ENCODE measurements at regions of chr16 and their contacts with region 1.

Region 1: DNA sequence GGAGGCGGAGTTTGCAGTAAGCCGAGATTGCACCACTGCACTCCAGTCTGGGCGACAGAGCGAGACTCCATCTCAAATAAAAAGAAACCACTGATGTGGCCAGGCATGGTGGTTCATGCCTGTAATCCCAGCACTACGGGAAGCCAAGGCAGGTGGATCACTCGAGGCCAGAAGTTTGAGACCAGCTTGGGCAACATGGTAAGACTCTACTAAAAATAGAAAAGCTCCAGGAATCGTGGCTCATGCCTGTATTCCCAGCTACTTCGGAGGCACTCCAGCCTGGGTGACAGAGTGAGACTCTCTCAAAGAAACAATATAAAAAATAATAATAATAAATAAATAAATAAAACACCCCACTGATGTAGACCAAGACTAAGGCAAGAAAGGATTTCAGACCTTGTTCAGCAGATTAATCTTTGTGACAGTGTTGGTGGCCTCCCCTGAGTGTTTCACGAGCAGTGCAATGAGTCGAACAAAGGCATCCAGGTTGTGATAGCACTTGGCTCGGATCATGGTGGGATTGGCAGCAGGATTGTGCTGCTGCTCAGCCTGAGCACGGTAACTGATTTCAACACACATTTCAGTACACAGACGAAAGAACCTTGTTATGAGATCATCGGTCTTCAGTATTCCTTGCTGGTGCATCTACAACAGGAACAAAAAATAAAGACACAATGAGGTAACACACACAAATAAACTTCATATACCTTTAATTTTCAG is 18.6 kb downstream of the SETD6 start:
- DNase-seq: no peak
- ATAC-seq: no peak
- H3K4me3 ChIP-seq: no peak overlapping the region
- H3K27ac ChIP-seq: no peak overlapping the region
- H3K4me1 ChIP-seq: no peaks in the 10 kb centered on the region
- H3K27me3 ChIP-seq: no peaks in the 10 kb centered on the region
- CTCF ChIP-seq: no peak
- EP300 ChIP-seq: no peak
- POLR2A ChIP-seq: no peak
- RAD21 ChIP-seq: no peak

Region 2: DNA sequence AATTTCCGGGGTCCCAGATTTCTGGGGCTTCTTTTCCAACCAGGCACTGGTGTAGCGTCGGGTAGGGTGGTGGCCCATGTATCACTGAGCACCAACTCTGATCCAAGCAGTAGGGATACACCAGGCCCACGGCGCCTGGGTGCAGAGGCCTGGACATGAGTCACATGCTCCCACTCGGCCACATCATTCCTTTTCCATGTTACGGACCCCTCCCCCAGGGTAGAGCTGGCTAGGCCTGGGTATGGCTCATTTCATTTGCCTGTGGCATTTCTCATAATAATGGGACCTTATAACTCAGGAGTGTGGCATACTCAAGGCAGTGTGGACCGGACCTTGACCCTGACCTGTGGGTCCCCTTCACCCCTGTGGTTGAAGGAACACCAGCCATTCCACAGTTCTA is 52.0 kb before region 1 on chr16:
- CTCF ChIA-PET with region 1: no interaction called
- POLR2A ChIA-PET with region 1: no interaction called
- RAD21 ChIA-PET with region 1: no interaction called
- SMC1A ChIA-PET with region 1: no interaction called
- in situ Hi-C with region 1: no loop called
- intact Hi-C with region 1: no loop called
- DNase-seq: no peak
- ATAC-seq: no peak
- H3K4me3 ChIP-seq: no peak overlapping the region
- H3K27ac ChIP-seq: no peak overlapping the region
- H3K4me1 ChIP-seq: no peaks in the 10 kb centered on the region
- H3K27me3 ChIP-seq: peaks cover 0 to 4% of the 10 kb centered on the region in 2 experiments; a peak in 1 of 4 replicates
- CTCF ChIP-seq: no peak
- EP300 ChIP-seq: no peak
- POLR2A ChIP-seq: no peak
- RAD21 ChIP-seq: no peak

Region 3: DNA sequence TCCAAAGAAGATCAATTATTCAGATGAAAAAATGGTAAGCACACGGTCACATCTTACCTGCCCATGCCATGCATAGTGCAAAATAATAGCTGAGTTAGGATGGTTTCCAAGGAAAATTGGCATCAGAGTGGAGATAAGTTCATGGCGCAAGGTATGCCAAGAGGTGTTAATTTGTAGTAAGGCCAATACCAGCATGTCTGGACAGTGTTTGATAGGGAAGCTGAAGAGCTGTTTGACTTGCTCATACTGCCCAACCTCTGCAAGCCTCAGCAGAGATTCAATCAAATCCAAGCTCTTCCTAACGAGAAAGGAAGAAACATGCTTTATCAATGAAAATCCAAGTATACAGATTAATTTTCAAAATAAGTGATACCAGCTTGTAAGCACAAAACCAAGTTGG is 44.7 kb after region 1 on chr16:
- CTCF ChIA-PET with region 1: no interaction called
- POLR2A ChIA-PET with region 1: interaction called, 3 read pairs
- RAD21 ChIA-PET with region 1: no interaction called
- SMC1A ChIA-PET with region 1: no interaction called
- in situ Hi-C with region 1: loop called (anchors 5 kb)
- intact Hi-C with region 1: loop called (anchors 5 kb)
- DNase-seq: no peak
- ATAC-seq: no peak
- H3K4me3 ChIP-seq: no peak overlapping the region
- H3K27ac ChIP-seq: no peak overlapping the region
- H3K4me1 ChIP-seq: no peaks in the 10 kb centered on the region
- H3K27me3 ChIP-seq: no peaks in the 10 kb centered on the region
- CTCF ChIP-seq: no peak
- EP300 ChIP-seq: no peak
- POLR2A ChIP-seq: no peak
- RAD21 ChIP-seq: no peak